Adrenal gland (tissue), 19 donors: ENCODE measurements at regions of chr6 and their contacts with region 1.

Region 1: DNA sequence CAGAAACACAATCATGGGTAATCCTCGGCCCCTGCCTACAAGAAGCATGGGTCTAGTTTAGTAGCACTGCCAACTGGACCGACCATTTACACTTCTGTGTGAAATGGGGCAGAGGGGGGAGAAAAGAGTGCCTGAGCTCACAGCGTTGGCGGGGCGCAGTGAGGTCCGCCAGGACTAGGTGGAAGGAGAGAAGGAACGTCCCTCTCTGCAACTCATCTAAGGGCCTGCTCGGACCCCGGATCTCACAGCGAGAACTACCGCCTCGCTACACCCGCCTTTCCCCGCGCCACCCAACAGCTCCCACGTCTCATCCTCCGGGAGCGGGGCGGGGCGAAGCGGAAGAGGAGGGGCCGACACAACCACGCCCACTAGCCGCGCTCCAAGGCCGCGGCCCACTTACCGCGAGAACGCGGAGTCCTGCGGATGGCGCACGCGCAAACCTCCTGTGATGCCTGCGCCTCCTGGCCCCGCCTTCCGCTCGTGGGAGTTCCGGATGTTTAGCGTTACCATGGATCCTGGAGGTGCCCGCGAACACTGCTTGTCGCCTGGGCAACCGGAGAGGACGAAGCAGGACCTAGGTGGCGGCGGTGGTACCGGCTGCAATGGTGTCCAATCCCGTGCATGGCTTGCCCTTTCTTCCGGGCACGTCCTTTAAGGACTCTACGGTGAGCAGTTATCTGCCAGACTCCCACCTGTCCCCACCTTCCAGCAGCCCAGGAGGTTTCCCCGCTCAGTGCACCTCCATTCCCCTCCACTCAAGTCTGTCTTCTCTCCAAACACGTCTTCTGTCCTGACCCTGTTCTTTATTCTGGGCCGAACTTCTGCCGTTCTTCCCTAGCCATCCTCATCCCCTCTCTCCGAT is at the start of gene EFHC1:
- DNase-seq: peak; percentile 97 to 99 (median 99)
- H3K4me3 ChIP-seq: peak within 1 kb of the TSS in 3 of 4 donors; percentile 1 to 83 (median 42)
- H3K27ac ChIP-seq: peak within 1 kb of the TSS in 4 of 5 donors; percentile 46 to 89 (median 76)
- H3K4me1 ChIP-seq: peaks cover 7 to 20% of the 10 kb centered on the region in 2 donors
- H3K27me3 ChIP-seq: no peaks in the 10 kb centered on the region
- CTCF ChIP-seq: no peak
- POLR2A ChIP-seq: peak; percentile 49 to 68
- total RNA-seq, gene EFHC1: 4.0 to 47.9 (median 15.9) TPM

Region 2: DNA sequence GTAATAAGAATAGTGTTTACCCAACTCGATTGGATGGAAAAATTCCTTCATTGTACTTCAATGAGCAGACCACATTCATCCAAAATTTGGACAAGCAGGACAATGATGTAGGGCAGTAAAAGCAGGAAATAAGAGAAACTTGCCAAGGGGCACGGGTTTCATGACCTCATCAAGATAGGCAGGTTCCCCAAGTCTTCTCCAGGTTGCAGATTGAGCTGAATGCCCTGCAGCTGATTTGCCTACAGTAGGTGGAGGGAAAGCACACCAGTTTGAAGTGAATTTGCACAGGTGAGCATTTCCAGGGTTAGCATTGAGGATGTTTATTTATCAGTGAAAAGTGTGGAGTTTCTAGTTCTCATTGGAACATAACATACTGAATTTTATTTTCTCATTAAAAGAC is 816.2 kb before region 1 on chr6:
- intact Hi-C with region 1: no loop called
- DNase-seq: no peak
- H3K4me3 ChIP-seq: no peak overlapping the region
- H3K27ac ChIP-seq: no peak overlapping the region
- H3K4me1 ChIP-seq: no peaks in the 10 kb centered on the region
- H3K27me3 ChIP-seq: no peaks in the 10 kb centered on the region
- CTCF ChIP-seq: no peak
- POLR2A ChIP-seq: no peak

Region 3: DNA sequence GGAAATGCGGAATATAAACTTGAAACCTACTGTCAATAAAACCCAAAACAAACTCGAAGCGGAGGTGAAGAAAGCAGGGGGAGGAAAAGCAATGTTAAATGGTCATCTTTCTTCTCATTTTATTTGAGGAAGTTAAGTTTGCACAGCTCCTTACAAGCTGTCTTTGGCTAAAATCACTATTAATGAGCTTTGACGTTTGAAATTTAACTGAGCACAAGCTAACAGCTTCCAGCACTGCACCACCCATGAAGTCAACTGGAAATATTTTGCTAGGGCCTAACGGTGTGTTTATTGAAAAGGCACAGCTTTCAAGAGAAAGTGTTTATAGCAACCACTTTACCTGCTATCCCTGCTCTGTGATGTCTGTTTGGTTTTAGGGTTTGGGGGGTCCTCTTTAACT is 436.5 kb before region 1 on chr6:
- intact Hi-C with region 1: no loop called
- DNase-seq: no peak
- H3K4me3 ChIP-seq: no peak overlapping the region
- H3K27ac ChIP-seq: no peak overlapping the region
- H3K4me1 ChIP-seq: no peaks in the 10 kb centered on the region
- H3K27me3 ChIP-seq: no peaks in the 10 kb centered on the region
- CTCF ChIP-seq: no peak
- POLR2A ChIP-seq: no peak

Region 4: GRCh38 chr6:52503848-52504781 is 84.1 kb after region 1 on chr6:
- intact Hi-C with region 1: loop called in 1 of 2 experiments (anchors 10 kb)
- DNase-seq: peak; percentile 65 to 88 (median 82)
- H3K4me3 ChIP-seq: no peak overlapping the region
- H3K27ac ChIP-seq: peak overlapping the region in 3 of 5 donors; percentile 34 to 67 (median 34)
- H3K4me1 ChIP-seq: peaks cover 5 to 11% of the 10 kb centered on the region in 2 donors
- H3K27me3 ChIP-seq: no peaks in the 10 kb centered on the region
- CTCF ChIP-seq: no peak
- POLR2A ChIP-seq: peak in 1 of 2 donors; percentile 10

Region 5: GRCh38 chr6:52577022-52577777 is 157.2 kb after region 1 on chr6 and contains the start of gene TRAM2:
- intact Hi-C with region 1: loop called in 1 of 2 experiments (anchors 10 kb)
- DNase-seq: peak; percentile 82 to 89 (median 86)
- H3K4me3 ChIP-seq: peak within 1 kb of the TSS; percentile 68 to 94 (median 84)
- H3K27ac ChIP-seq: peak within 1 kb of the TSS; percentile 91 to 100 (median 98)
- H3K4me1 ChIP-seq: peaks cover 25 to 29% of the 10 kb centered on the region in 2 donors
- H3K27me3 ChIP-seq: no peaks in the 10 kb centered on the region
- CTCF ChIP-seq: peak in 2 of 6 experiments; percentile 5 to 21
- POLR2A ChIP-seq: peak; percentile 77 to 78
- total RNA-seq, gene TRAM2: 8.0 to 17.9 (median 10.7) TPM

Region 6: GRCh38 chr6:52598123-52598823 is 178.2 kb after region 1 on chr6:
- intact Hi-C with region 1: loop called in 1 of 2 experiments (anchors 5 kb)
- DNase-seq: peak; percentile 57 to 85 (median 79)
- H3K4me3 ChIP-seq: peak overlapping the region in 1 of 4 donors; percentile 26
- H3K27ac ChIP-seq: peak overlapping the region in 2 of 5 donors; percentile 35 to 63
- H3K4me1 ChIP-seq: peaks cover 4 to 15% of the 10 kb centered on the region in 2 donors
- H3K27me3 ChIP-seq: no peaks in the 10 kb centered on the region
- CTCF ChIP-seq: peak; percentile 71 to 91 (median 80)
- POLR2A ChIP-seq: no peak

Region 7: DNA sequence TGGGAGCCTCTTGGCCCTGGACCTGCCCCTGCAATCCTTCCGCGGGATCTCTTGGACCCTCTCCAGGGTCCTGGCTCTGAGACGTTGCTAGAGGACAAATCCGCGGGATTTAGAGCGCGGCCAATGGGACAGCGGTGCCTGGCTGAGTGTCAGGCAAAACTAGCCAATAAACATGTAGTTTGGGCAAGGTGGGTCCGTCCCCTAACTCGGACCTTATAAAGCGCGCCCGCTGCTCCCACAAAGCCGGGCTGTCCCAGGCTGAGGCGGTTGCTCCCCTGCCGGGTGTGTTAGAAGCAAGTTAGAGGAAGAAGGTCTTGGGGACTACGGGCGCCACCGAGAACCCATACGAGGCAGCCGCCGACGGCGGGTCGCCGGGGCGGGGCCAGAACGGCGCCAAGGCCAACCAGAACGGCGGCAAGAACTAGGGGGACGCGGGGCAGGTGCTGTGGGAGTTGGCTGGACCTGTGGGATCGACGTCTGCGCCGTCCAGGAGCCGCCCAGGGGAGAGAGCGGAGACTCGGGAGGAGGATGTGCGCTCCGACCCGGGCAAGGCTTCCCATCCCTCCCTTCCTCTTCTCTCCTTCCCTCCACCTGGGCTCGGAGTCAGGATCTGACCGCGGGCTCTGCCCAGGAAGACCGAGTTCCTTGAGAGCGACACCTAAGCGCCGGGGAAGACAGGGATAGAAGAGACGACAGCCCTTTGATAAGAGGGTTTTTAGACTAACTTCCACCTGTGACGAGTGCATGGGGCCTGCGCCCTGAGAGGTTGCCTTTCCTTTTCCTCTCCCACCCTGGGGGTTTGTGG is 244.3 kb after region 1 on chr6:
- intact Hi-C with region 1: loop called (anchors 5 kb)
- DNase-seq: peak; percentile 87 to 97 (median 94)
- H3K4me3 ChIP-seq: peak overlapping the region; percentile 10 to 72 (median 69)
- H3K27ac ChIP-seq: peak overlapping the region in 3 of 5 donors; percentile 55 to 65 (median 61)
- H3K4me1 ChIP-seq: peaks cover 0 to 12% of the 10 kb centered on the region in 2 donors
- H3K27me3 ChIP-seq: no peaks in the 10 kb centered on the region
- CTCF ChIP-seq: no peak
- POLR2A ChIP-seq: peak; percentile 88 to 90